Cardiac septum (tissue), 1 donor: ENCODE measurements at regions of chr1 and their contacts with region 1.

Region 1: GRCh38 chr1:11913291-11913690 is 12.9 kb downstream of the KIAA2013 start:
- DNase-seq: no peak

Region 2: GRCh38 chr1:11761988-11762406 is 151.3 kb before region 1 on chr1 and contains the start of gene C1orf167:
- intact Hi-C with region 1: no loop called
- DNase-seq: no peak
- total RNA-seq, gene C1orf167: 2.3 TPM

Region 3: DNA sequence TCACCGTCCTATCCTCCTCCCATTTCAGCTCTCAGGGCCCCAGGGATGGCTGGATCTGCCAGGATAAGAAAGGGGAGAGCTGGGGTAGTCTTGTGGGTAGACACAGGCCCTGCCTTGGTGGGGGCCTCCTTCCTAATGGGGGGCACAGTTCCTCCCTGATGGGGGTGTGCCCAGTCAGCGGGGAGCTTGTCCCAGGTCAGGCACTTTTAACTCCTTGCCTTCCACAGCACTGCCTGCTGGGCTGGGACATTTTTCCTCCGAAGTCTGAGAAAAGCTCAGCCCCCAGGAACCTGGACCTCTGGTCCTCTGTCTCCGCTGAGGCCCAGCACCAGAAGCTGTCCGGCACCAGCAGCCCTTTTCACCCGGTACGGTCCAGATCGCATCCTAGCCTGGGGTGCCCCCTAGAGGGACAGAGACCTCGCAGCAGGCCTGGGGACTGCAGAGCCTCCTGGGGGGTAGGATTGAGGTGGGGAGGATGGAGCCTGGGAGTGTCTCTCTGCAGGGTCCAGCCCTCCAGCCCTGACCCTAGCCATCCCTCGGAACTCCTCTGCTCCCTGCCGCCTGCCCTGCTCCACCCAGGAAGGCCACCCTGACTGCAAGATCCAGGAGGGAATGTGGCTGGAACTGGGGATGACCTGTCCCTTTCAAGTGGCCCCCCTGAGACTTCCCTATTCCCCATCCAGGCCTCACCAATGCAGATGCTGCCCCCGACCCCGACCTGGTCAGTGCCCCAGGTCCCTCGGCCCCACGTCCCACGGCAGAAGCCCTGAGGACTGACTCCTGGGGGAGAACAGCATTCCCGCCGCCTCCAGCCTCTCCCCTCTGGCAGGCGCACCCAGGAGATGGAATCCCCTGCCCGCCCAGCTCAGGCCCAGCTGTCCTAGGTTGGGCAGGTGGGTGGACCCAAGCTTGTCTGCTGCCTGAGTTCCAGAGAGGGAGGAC is 118.0 kb after region 1 on chr1:
- intact Hi-C with region 1: loop called (anchors 5 kb)
- DNase-seq: no peak